ENCODE measurements at regions of chr2 and their contacts with region 1.

Region 1: DNA sequence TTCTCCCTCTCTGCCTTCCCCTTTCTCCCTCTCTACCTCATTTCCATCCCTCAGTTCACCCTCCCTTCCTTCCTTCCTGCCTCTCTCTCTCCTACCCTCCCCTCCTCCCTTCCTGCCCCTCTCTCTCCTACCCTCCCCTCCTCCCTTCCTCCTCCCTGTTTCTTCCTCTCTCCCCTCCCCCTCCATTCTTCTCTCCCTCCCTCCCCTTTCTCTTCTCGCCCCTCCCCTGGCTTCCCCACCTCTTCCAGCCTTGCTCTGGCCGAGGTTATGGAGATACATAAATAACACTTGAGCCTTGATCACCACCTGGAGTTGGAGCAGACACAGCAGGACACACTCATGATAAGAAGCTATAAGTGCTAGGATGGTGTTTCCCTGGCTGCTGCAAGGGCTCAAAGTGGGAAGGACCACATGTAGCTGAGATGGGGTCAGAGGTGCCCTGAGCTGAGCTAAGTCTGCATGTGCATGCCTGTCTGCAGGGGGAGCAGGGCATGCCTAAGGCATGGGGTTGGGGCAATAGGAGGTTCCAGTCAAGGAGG is 326.1 kb upstream of the HS6ST1 start:
- DNase-seq: no peak
- H3K4me3 ChIP-seq: no peak overlapping the region
- H3K27ac ChIP-seq: no peak overlapping the region
- H3K4me1 ChIP-seq: no peaks in the 10 kb centered on the region
- H3K27me3 ChIP-seq: peaks cover 2% of the 10 kb centered on the region
- CTCF ChIP-seq: no peak

Region 2: DNA sequence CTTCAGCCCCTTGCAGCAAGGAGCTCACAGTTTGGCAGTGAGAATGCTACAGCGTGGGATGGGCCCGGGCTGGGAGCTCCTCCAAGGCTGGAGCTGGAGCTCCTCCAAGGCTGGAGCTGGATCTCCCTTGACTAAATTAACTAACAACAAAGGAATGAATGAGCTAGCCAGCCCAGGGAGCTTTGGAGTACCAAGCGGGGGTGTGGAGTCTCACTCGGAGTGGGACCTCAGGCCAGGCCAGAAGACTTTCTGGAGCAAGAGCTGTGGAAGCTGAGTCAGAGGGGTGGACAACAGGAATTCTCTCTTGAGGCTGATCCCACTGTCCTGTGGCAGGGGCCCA is 81.5 kb before region 1 on chr2:
- CTCF ChIA-PET with region 1: no interaction called
- dilution Hi-C with region 1: no loop called
- in situ Hi-C with region 1: no loop called
- intact Hi-C with region 1: no loop called
- DNase-seq: no peak
- H3K4me3 ChIP-seq: no peak overlapping the region
- H3K27ac ChIP-seq: no peak overlapping the region
- H3K4me1 ChIP-seq: no peaks in the 10 kb centered on the region
- H3K27me3 ChIP-seq: no peaks in the 10 kb centered on the region
- CTCF ChIP-seq: no peak

Region 3: DNA sequence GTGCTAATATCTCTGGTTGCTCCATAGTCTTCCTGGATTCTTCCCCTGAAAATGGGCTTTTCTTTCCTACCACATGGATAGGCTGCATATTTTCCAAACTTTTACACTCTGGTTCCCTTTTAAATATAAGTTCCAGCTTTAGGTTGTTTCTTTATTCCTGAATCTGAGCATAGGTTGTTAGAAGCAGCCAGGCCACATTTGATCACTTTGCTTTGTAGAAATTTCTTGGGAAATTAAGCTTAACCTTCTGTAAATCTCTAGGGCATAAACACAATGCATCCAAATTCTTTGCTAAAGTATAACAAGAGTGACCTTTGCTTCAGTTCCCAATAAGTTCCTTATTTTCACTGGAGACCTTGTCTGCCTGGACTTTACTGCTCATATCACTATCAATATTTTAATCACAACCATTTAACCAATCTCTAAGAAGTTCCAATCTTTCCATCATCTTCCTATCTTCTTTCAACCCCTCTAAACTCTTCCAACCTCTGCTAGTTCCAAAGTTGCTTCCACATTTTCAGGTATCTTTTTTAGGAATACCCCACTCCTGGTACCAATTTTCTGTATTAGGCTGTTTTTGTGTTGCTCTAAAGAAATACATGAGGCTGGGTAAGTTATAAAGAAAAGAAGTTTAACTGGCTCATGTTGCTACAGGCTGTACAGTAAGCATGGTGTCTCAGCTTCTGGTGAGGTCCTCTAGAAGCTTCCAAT is 63.5 kb after region 1 on chr2:
- CTCF ChIA-PET with region 1: no interaction called
- dilution Hi-C with region 1: loop called (anchors 5 kb)
- in situ Hi-C with region 1: no loop called
- intact Hi-C with region 1: no loop called
- DNase-seq: no peak
- H3K4me3 ChIP-seq: no peak overlapping the region
- H3K27ac ChIP-seq: no peak overlapping the region
- H3K4me1 ChIP-seq: no peaks in the 10 kb centered on the region
- H3K27me3 ChIP-seq: no peaks in the 10 kb centered on the region
- CTCF ChIP-seq: no peak

Region 4: GRCh38 chr2:128720508-128720907 is 75.7 kb after region 1 on chr2:
- CTCF ChIA-PET with region 1: no interaction called
- dilution Hi-C with region 1: no loop called
- in situ Hi-C with region 1: no loop called
- intact Hi-C with region 1: no loop called
- DNase-seq: no peak
- H3K4me3 ChIP-seq: no peak overlapping the region
- H3K27ac ChIP-seq: no peak overlapping the region
- H3K4me1 ChIP-seq: no peaks in the 10 kb centered on the region
- H3K27me3 ChIP-seq: peaks cover 9% of the 10 kb centered on the region
- CTCF ChIP-seq: peak; percentile 16 to 22